HEK293 (cell line): ENCODE measurements at regions of chr11 and their contacts with region 1.

Region 1: DNA sequence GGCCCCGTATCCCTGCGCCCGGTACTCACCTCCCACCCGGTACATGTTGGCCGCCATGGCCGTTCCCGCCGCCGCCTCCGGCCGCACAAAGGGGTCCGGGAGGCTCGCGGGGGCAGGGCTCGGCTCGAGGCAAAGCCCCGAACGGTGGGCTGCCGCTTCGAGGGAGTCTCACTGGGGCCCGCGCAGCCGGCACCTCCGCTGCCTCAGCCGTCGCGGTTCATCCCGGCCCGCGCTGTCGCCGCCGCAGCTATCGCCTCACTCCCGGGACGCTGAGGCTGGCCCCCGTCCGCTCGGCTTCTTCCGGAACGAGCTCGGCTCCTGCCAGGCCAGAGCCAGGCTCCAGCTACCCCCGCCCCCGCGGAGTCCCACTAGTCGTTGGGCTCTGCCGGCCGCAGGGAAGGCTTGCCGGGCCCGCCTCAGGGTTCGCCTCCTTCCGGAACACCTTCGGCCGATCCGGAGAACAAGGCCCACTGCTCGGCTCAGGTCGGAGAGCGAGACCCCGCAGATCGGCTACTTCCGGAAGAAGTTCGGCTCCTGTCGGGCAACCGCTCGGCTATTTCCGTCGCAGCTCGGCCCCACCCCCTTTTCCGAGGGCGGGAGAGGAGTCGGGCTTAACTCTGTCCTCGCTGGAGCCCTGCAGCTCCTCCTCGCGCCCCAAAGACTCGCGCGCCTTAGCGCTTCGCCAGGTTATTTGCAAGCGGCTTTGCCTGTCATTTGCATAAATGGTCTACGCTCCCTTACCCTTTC is at the start of gene MTA2:
- H3K4me3 ChIP-seq: peak within 1 kb of the TSS; percentile 91
- H3K27ac ChIP-seq: peak within 1 kb of the TSS; percentile 95
- H3K4me1 ChIP-seq: no peaks in the 10 kb centered on the region
- CTCF ChIP-seq: no peak

Region 2: DNA sequence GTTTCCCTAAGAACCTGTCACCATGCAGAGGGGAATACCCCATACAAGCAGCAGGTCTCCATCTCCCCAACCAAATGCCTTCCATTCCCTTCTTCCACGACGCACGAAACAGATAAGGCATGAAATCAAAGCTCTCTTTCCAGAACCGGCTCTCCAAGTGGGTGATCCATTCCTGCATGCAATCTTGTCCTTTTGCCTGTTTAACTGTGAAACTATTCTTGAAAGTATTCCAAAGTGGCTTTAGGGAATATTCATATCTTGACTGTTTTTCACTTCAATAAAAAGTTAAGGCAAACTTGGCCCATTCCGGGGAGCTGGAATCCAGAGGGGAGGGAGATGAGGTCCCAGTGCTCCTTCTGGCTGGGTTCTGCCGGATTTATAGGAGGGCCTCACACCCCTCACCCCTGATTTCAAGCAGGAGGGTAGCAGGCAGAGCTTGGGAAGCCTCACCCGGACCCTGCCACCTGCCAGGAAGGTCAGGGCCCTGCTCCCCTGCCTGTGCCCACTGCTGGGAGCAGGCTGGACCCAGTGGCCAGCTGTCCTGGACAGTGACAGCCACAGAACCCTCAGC is 121.9 kb before region 1 on chr11:
- CTCF ChIA-PET with region 1: no interaction called
- POLR2A ChIA-PET with region 1: no interaction called
- H3K4me3 ChIP-seq: no peak overlapping the region
- H3K27ac ChIP-seq: no peak overlapping the region
- H3K4me1 ChIP-seq: no peaks in the 10 kb centered on the region
- CTCF ChIP-seq: no peak

Region 3: GRCh38 chr11:62612366-62613290 is 11.1 kb after region 1 on chr11 and contains the starts of genes EML3 and ROM1:
- CTCF ChIA-PET with region 1: interaction called, 12 read pairs
- POLR2A ChIA-PET with region 1: interaction called, 31 read pairs
- H3K4me3 ChIP-seq: peak within 1 kb of the TSS; percentile 55
- H3K27ac ChIP-seq: peak within 1 kb of the TSS; percentile 64
- H3K4me1 ChIP-seq: no peaks in the 10 kb centered on the region
- CTCF ChIP-seq: no peak

Region 4: DNA sequence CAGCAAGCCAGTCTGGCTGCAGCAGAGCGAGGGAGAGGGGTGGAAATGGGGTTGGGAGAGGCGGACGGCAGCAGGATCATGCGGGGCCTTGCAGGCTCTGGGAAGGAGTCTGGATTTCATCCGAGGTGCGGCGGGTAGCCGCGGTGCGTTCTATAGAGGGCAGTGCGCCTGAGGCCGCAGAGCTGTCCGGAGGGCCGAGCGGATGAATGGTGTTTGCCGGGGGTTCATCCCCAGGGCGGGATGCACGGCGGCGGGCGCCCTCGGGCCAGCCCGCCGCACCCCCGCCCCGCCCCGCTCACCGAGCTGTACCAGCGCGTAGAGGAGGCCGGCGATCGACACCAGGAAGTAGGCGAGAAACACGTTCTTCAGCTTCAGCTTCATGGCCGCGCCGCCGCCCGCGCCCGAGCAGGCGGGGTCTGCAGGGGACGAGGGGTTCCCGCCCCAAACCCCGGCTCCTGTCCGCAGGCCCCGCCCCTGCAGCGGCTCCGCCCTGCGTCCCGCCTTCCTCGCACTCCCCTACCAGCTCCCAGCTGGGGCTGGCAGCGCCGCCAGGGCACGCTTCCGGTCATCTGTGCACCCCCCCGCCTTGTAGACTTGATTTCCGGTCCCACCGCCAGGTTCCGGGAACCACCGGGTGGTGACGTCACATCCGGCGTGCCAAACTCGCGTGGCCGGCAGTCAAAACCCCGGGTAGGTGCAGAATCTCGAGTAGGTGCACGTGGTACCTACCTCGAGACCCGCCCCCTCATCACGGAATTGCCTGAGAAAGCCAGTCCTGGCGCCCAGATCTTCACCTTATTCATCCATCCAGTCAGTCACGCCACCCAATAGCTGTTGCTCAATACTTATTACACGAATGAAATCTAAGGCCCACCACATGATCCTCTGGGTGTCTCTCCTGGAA is 20.3 kb after region 1 on chr11 and contains the start of gene B3GAT3:
- CTCF ChIA-PET with region 1: interaction called, 3 read pairs
- POLR2A ChIA-PET with region 1: interaction called, 40 read pairs
- H3K4me3 ChIP-seq: peak within 1 kb of the TSS; percentile 71
- H3K27ac ChIP-seq: peak within 1 kb of the TSS; percentile 80
- H3K4me1 ChIP-seq: no peaks in the 10 kb centered on the region
- CTCF ChIP-seq: peak; percentile 5; the same call in 1 of the 2 replicates

Region 5: DNA sequence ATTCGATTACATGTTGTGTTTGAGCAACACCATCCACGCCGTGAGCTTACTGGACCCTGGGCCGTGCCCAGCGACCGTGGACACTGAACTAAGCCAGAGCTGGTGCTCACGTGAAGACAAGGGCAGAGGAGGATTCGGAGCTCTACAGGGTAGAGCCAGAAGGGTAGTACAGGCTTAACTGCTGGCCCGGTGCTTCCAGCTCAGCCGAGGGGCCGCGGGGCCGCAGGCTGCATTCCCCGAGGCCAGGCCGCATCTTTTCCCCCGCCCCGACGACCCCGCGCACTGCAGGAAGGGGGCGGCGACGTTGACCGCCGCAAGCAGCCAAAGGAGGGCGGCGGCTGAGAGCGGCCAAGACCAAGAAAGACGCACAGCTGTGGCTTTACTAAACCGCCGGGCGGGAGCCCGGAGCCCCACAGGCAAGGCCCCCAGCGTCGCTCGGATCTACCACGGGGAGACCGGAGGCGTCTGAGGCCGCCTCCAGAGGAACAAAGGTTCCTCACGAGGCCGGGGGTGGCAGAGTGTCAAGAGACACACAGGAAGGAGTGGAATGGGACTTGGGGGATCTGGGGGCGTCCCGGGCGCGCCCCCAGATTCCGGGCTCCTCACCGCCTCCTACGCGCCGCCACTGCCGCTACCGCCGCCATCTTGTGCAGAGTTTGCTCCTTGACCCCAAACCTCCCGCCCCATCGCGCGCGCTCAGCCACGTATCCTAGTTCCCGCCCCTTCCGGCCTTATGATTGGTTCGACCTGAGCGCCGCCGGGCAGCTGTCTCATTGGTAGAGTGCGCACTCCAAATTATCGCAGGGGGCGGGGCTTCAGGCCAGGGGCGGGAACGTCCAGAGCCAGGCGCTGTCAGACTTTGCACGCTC is 44.6 kb after region 1 on chr11 and contains the start of gene GANAB:
- CTCF ChIA-PET with region 1: interaction called, 5 read pairs
- POLR2A ChIA-PET with region 1: interaction called, 14 read pairs
- H3K4me3 ChIP-seq: peak within 1 kb of the TSS; percentile 86
- H3K27ac ChIP-seq: peak within 1 kb of the TSS; percentile 83
- H3K4me1 ChIP-seq: peaks cover 3% of the 10 kb centered on the region; the same call in 1 of the 2 replicates
- CTCF ChIP-seq: 0 out of 2 replicates have a peak, but pooled peaks have one; percentile 12